ENCODE measurements at regions of chrX and their contacts with region 1.

Region 1: DNA sequence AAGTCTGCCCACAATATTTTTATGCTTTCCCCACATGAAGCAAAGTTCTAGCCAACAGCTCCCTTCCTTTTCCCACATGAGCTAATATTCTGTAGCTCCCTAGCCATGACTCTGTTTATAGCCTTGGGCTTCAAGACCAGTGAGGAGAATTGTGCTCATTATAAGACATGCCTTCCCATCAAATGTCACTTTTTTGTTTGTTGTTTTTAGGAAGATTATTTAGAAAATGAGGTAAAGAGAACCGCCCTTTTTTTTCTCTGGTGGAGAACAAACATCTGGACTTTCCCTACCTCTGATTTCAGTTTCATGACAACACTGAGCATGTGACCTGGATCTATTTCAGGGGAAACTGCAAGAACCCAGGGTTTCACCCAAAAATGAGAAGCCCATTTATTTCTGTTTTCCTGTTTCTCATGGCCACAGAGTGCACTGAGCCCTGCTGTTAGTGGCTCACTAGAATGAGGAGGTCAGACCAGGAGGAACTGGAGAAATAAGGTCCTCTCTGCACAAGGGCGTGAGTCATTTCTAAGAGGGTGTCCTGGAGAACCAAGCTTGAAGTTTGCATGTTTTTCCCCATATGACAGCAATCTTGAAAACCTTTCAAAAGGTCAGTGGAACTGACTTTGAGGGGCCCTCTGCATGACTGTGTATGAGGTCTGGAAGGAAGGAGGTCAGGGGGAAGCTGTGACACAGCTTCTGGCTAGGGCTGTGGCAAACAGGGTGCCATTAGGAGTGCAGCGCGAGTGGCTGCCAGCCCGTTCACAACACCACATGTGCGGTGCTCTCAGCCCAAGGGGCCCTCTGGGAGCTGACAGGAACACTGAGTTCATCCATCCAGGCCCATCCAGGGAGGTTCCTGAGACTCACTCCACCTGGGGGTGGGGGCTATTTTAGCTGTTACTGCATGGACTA is 55.2 kb downstream of the CHST7 start:
- DNase-seq: peak; percentile 68
- H3K4me3 Mint-ChIP-seq: peak overlapping the region; percentile 67
- H3K27ac Mint-ChIP-seq: peak overlapping the region; percentile 94
- H3K4me1 Mint-ChIP-seq: peaks cover 20% of the 10 kb centered on the region
- H3K27me3 Mint-ChIP-seq: no peaks in the 10 kb centered on the region

Region 2: GRCh38 chrX:46506076-46506475 is 122.6 kb before region 1 on chrX:
- intact Hi-C with region 1: no loop called
- DNase-seq: no peak
- H3K4me3 Mint-ChIP-seq: no peak overlapping the region
- H3K27ac Mint-ChIP-seq: no peak overlapping the region
- H3K4me1 Mint-ChIP-seq: no peaks in the 10 kb centered on the region
- H3K27me3 Mint-ChIP-seq: no peaks in the 10 kb centered on the region

Region 3: DNA sequence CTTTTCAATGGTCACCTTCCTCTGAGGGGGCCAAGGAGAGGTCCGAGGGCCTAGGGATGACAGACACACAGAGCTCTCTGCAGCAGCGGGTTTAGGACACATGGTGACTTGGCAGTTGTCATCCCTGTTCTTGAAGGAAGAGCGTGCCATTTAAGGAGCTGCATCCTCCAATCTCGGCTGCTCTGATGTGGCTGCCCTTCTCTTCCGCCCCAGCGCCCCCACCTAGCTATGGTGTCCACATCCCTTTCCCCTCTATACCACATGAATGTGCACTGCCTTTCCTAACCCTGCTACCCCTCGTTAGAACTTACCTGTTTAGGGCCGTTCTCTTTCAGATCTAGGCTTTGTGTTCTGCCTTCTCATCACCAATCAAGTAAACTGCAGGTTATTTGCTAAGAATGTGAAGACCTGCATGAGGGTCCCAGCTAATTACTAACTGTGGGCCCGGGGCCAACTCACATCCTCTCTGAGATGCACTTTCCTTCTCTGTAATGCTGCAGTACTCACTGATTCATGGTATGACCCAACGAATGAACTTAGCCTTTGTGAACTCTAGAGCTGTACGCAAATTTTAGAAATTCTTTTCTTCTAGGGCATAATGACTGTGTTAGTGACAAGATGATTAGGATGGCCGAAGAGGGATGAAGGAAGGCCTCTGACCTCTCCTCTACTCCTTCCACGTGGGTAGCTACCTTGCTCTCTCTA is 16.9 kb before region 1 on chrX:
- intact Hi-C with region 1: loop called (anchors 2 kb)
- DNase-seq: peak; percentile 85
- H3K4me3 Mint-ChIP-seq: peak overlapping the region; percentile 64
- H3K27ac Mint-ChIP-seq: peak overlapping the region; percentile 73
- H3K4me1 Mint-ChIP-seq: peaks cover 39% of the 10 kb centered on the region
- H3K27me3 Mint-ChIP-seq: no peaks in the 10 kb centered on the region

Region 4: GRCh38 chrX:46812445-46812844 is 183.7 kb after region 1 on chrX:
- intact Hi-C with region 1: no loop called
- DNase-seq: no peak
- H3K4me3 Mint-ChIP-seq: no peak overlapping the region
- H3K27ac Mint-ChIP-seq: no peak overlapping the region
- H3K4me1 Mint-ChIP-seq: no peaks in the 10 kb centered on the region
- H3K27me3 Mint-ChIP-seq: peaks cover 13% of the 10 kb centered on the region

Measured in activated CD4-positive, alpha-beta T cell treated with anti-CD3 and anti-CD28 coated beads, Interleukin-2, amount 10 ng/mL, durations not matched to agents 24 days and 14 days (primary cell).